Colonic mucosa (tissue), 4 donors: ENCODE measurements at regions of chr16 and their contacts with region 1.

Region 1: DNA sequence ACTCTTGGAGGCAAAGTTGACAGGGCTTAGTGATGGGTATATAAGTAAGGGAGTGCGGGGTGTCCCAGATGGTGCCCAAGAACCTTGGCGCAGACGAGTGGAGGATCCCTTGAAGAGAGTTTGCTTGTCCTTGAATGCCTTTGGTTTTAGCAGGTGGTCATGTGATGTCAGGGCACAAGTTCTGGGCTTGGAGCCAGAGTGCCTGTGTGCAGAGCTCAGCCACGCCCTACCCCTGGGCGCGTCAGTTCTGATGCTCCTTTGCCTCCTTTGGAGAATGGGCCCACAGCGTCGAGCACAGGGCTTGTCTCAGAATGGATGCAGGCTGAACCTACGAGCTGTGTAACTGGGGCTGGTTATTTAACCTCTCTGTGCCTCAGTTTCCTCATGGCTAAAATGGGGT is 412.2 kb upstream of the EEF2KMT start:
- DNase-seq: peak; percentile 84
- H3K4me3 ChIP-seq: no peak overlapping the region
- H3K27ac ChIP-seq: no peak overlapping the region
- H3K4me1 ChIP-seq: no peaks in the 10 kb centered on the region
- H3K27me3 ChIP-seq: no peaks in the 10 kb centered on the region
- CTCF ChIP-seq: no peak

Region 2: DNA sequence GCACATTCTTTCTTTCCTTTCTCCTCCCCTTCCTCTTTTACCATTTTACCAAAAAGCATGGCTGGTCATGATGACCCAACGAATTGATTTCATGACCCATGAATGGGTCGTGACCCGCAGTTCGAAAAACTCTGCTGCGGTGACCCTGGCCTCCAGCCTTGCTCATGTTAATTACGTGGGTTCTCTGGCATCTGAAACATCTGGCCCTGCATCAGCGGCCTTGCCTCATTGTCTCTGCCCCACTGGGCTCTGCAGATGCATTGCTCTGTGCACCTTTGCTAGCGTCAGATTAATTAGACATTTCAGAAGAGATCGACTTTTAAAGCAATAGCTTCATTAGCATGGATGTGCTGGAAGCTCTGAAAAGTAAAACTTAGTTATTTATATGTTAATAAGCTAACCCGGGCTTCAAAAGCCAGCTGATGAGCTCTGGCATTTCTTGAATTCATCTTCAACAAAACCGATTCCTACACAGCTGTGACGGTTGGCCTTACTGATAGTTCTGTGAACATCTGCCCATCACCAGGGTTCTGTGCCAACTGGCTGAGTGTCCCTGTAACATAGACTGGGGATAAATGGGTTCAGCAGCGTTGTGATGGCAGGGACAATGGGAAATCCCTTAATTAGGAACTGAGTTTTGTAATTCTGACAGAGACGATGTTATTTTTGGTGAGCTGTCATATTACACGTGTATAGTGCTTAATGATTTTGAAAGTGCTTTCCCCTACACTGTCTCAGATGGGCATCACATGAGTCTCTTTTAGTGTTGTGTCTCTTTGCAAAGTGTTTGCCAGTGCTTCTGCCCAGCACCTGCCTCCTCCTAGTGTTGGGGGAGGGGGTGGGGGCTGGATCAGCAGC is 186.3 kb before region 1 on chr16:
- intact Hi-C with region 1: no loop called
- DNase-seq: no peak
- H3K4me3 ChIP-seq: no peak overlapping the region
- H3K27ac ChIP-seq: no peak overlapping the region
- H3K4me1 ChIP-seq: no peaks in the 10 kb centered on the region
- H3K27me3 ChIP-seq: no peaks in the 10 kb centered on the region
- CTCF ChIP-seq: no peak

Region 3: GRCh38 chr16:5604770-5605169 is 95.0 kb after region 1 on chr16:
- intact Hi-C with region 1: loop called (anchors 5 kb)
- DNase-seq: peak; percentile 18
- H3K4me3 ChIP-seq: no peak overlapping the region
- H3K27ac ChIP-seq: no peak overlapping the region
- H3K4me1 ChIP-seq: no peaks in the 10 kb centered on the region
- H3K27me3 ChIP-seq: no peaks in the 10 kb centered on the region
- CTCF ChIP-seq: no peak

Region 4: GRCh38 chr16:5709889-5710288 is 200.1 kb after region 1 on chr16:
- intact Hi-C with region 1: no loop called
- DNase-seq: no peak
- H3K4me3 ChIP-seq: no peak overlapping the region
- H3K27ac ChIP-seq: no peak overlapping the region
- H3K4me1 ChIP-seq: no peaks in the 10 kb centered on the region
- H3K27me3 ChIP-seq: no peaks in the 10 kb centered on the region
- CTCF ChIP-seq: no peak